ENCODE measurements at regions of chr6 and their contacts with region 1.

Region 1: DNA sequence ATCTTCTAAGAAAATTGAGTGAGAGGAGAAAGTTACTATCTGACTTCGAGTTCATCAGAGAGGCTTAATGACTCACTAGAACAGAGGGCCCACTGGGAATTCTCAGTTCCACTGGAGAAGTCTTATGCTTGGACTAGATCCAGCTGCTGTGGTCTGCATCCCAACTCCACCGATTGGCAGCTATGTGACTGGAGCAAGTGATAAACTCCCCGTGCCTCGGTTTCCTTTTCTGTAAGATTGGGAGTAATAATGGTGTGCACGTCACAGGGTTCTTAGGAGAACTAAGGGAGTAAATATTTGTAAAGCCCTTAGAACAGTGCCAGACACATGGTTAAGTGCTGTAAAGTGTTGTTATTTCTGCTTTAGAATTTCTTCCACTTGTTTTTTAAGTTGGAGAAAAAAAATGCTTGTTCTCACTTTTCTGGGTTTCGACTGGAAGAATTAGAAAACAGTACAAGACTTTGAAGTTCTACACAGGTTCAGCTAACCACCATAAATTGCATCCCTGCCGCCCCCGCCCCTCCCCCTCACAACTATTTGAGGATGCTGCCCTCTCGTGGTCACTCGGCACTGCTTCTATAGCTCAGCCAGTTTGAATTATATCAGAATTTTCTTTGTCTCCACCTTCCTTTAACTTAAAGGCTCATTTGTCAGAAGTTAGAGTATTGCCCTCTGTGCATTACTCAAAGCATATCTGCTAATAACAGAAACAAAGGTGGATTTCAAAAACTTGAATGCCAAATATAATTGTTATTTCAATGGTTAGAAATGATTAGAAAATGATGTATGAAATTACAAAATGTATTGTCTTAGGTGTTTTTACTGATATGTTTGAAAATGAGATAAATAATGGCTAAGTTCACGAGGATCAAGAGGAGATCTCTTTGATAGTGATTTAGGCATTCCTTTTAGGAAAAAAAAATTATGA is 95.0 kb upstream of the IFNGR1 start:
- DNase-seq: peak; percentile 69 to 74
- ATAC-seq: peak; percentile 79 to 96 (median 91)
- H3K4me3 ChIP-seq: peak overlapping the region in 5 of 10 donors; percentile 2 to 35 (median 20)
- H3K27ac ChIP-seq: peak overlapping the region in 1 of 10 donors; percentile 10
- H3K4me1 ChIP-seq: peaks cover 0 to 27% (median 13%) of the 10 kb centered on the region in 9 donors
- H3K27me3 ChIP-seq: no peaks in the 10 kb centered on the region
- CTCF ChIP-seq: peak; percentile 65 to 86 (median 81)

Region 2: DNA sequence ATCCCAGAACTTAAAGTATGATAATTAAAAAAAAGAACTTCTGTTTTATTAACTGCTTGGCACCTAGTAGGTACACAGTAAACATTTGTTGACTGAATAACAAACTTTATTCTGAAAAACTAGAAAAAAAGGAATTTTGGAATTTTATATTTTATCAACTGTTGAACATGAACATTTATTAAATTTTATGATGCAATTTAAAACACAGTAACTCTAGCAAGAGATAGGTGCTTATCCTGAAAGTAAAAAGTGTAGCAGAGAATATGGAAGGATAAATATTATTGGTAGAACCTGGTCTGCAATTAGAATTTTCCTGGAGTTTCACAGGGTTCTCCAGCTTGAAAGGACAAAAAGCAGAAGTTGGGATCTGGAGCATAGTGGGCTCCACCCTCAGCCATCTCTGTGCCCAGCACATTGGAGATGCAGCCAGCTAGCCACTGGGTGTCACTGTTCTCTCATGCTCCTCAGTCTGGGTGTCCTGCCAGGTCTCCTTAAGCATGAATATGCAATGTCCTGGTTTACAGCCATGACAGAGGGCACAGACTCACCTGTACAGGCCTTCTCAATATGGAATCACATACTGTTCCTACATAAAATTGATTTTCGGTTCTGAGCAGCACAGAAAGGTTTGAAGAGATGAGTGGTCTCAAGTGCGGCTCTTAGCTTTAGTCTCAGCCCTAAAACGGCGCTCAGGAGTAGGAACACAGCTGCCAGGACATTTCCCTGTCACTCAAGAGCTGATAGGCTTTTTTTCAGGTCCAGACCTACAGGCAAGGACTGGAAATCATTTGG is 237.7 kb before region 1 on chr6:
- intact Hi-C with region 1: loop called in 1 of 10 experiments (anchors 5 kb)
- DNase-seq: peak; percentile 54 to 69
- ATAC-seq: peak; percentile 83 to 100 (median 96)
- H3K4me3 ChIP-seq: no peak overlapping the region
- H3K27ac ChIP-seq: no peak overlapping the region
- H3K4me1 ChIP-seq: no peaks in the 10 kb centered on the region
- H3K27me3 ChIP-seq: peaks cover 0 to 5% (median 0%) of the 10 kb centered on the region in 7 donors
- CTCF ChIP-seq: peak; percentile 48 to 82 (median 74)

Region 3: GRCh38 chr6:137202078-137202477 is 112.1 kb before region 1 on chr6:
- intact Hi-C with region 1: loop called in 2 of 10 experiments (anchors 5 to 10 kb)
- DNase-seq: no peak
- ATAC-seq: peak in 7 of 8 donors; percentile 72 to 89 (median 76)
- H3K4me3 ChIP-seq: no peak overlapping the region
- H3K27ac ChIP-seq: no peak overlapping the region
- H3K4me1 ChIP-seq: peaks cover 0 to 48% (median 26%) of the 10 kb centered on the region in 9 donors
- H3K27me3 ChIP-seq: no peaks in the 10 kb centered on the region
- CTCF ChIP-seq: peak; percentile 16 to 61 (median 43)

Region 4: DNA sequence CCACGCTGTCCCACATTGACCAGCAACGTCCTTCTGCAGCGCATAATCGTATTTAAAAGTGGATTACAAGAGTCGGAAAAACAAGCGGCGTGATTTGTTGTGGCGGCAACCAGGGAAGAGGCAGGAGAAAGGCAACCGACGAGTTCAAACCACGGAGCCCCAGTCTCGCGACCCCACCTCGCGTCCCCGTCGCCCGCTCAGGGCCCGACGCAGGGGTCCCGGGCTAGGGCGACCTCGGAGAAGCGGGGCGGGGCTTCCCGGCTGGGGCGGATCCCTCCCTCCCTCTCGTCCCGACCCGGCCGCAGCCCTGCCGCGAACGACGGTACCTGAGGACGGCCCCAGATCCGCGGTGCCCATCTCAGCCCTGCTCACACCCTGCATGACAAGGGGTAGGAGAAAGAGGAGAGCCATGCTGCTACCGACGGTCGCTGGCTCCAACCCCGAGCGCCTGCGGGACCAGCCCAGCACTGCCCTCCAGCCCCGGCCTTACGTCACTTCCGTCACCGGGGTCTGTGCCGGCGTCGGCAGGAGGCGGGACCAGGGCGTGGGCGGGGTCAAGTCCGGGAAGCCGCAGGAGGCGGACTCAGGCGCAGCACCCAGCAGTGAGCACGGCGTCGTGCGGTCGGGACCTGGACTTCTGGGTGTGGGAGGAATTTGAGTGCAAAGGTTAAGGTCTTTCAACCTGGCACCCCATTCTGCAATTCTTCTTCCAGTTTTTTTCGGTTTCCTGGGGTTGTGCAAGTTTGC is 95.1 kb before region 1 on chr6 and contains the start of gene IFNGR1:
- intact Hi-C with region 1: loop called in 1 of 10 experiments (anchors 5 kb)
- DNase-seq: peak; percentile 98 to 99
- ATAC-seq: peak; percentile 96 to 97 (median 96)
- H3K4me3 ChIP-seq: peak within 1 kb of the TSS; percentile 45 to 93 (median 84)
- H3K27ac ChIP-seq: peak within 1 kb of the TSS; percentile 86 to 100 (median 98)
- H3K4me1 ChIP-seq: peaks cover 5 to 87% (median 67%) of the 10 kb centered on the region in 9 donors
- H3K27me3 ChIP-seq: no peaks in the 10 kb centered on the region
- CTCF ChIP-seq: no peak
- total RNA-seq, gene IFNGR1: 55.8 to 132 (median 78.7) TPM

Region 5: GRCh38 chr6:137271245-137272183 is 42.7 kb before region 1 on chr6:
- intact Hi-C with region 1: loop called in 9 of 10 experiments (anchors 1 to 5 kb)
- DNase-seq: no peak
- ATAC-seq: peak in 7 of 8 donors; percentile 63 to 82 (median 73)
- H3K4me3 ChIP-seq: no peak overlapping the region
- H3K27ac ChIP-seq: no peak overlapping the region
- H3K4me1 ChIP-seq: peaks cover 0 to 14% (median 0%) of the 10 kb centered on the region in 9 donors
- H3K27me3 ChIP-seq: no peaks in the 10 kb centered on the region
- CTCF ChIP-seq: peak; percentile 76 to 97 (median 93)

Region 6: DNA sequence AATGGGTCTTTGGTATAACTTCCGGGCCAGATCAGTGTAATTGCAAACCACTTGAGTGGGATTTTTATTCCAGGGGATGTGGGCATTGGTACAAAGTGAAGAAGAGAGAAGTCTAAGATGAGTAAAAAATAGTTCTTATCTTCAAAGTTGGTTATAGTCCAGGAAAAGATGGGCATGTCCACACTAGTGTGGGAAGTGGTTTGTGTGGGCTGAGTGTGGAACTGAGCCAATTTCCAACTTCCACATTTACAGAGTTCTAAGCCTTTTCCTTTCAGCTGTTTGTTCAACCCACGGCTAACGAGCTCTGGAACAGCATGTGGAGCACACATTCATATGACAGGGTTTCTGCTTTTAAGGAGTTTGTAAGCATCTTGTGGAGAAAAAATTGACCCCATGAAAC is 22.8 kb before region 1 on chr6:
- intact Hi-C with region 1: no loop called
- DNase-seq: peak in 1 of 2 donors; percentile 59
- ATAC-seq: peak in 7 of 8 donors; percentile 75 to 87 (median 81)
- H3K4me3 ChIP-seq: no peak overlapping the region
- H3K27ac ChIP-seq: no peak overlapping the region
- H3K4me1 ChIP-seq: peaks cover 0 to 22% (median 3%) of the 10 kb centered on the region in 9 donors
- H3K27me3 ChIP-seq: no peaks in the 10 kb centered on the region
- CTCF ChIP-seq: no peak

Region 7: DNA sequence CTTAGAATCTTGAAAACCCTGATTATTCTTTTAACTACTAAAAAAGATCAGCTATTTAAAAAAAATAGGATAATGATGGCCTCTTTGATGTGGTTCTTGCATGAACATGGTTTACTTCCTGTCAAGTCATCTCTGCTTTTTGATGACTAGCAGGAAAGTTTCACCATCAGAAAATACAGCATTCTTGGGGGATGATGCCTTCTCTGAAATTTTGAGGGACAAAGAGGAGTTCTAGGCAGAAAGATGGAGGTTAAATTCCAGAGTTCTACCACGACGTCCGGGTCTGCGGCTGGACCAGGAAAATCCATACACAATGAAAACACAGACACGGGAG is 49.6 kb after region 1 on chr6:
- intact Hi-C with region 1: no loop called
- DNase-seq: no peak
- ATAC-seq: no peak
- H3K4me3 ChIP-seq: no peak overlapping the region
- H3K27ac ChIP-seq: no peak overlapping the region
- H3K4me1 ChIP-seq: no peaks in the 10 kb centered on the region
- H3K27me3 ChIP-seq: peaks cover 0 to 11% (median 0%) of the 10 kb centered on the region in 7 donors
- CTCF ChIP-seq: no peak

Region 8: GRCh38 chr6:137625796-137626195 is 311.6 kb after region 1 on chr6:
- intact Hi-C with region 1: no loop called
- DNase-seq: no peak
- ATAC-seq: no peak
- H3K4me3 ChIP-seq: no peak overlapping the region
- H3K27ac ChIP-seq: no peak overlapping the region
- H3K4me1 ChIP-seq: no peaks in the 10 kb centered on the region
- H3K27me3 ChIP-seq: peaks cover 0 to 36% (median 16%) of the 10 kb centered on the region in 7 donors
- CTCF ChIP-seq: no peak